CD8-positive, alpha-beta T cell (primary cell): ENCODE measurements at regions of chr7 and their contacts with region 1.

Region 1: DNA sequence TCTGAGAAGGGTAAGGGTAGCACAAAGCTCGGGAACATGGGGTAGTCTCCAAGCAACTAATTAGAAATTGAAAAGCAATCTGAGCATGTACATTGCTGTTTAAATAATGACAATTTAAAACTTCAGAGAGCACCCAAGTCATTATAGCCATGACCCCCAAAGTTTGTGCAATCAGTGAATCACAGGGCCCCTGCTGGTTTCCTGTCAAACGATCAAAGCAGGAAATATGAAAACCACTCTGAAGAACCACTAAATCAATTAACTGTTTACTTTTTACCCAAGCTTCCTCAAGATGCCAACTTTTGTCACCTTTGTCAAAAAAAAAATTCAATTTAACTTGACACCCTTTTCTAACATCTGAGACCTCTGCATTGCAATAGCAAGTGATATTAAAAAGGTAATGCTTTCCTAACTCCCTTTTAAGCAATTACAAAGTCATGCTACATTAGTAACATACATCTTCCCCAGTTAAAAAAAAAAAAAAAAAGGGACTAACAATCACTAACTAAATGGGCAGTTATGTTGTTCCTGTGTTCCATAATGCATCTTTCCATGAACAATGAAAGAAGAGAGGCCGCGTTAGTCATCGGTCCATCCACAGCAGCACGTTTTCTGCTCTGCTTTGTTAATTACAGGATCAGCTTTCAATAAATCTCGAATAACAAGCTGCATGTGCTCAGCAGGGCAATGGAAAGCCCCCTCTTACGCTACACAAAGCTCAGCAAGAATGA is 80.6 kb downstream of the ETV1 start:
- DNase-seq: peak in 8 of 9 experiments; percentile 1 to 55 (median 24)
- ATAC-seq: peak; percentile 48
- H3K4me3 ChIP-seq: no peak overlapping the region
- H3K4me3 Mint-ChIP-seq: peak overlapping the region; percentile 0
- H3K27ac ChIP-seq: no peak overlapping the region
- H3K27ac Mint-ChIP-seq: no peak overlapping the region
- H3K4me1 ChIP-seq: peaks cover 41% of the 10 kb centered on the region
- H3K4me1 Mint-ChIP-seq: peaks cover 26% of the 10 kb centered on the region
- H3K27me3 ChIP-seq: no peaks in the 10 kb centered on the region
- H3K27me3 Mint-ChIP-seq: no peaks in the 10 kb centered on the region
- CTCF ChIP-seq: no peak

Region 2: GRCh38 chr7:13850185-13850752 is 58.6 kb before region 1 on chr7:
- CTCF ChIA-PET with region 1: no interaction called
- POLR2A ChIA-PET with region 1: no interaction called
- intact Hi-C with region 1: loop called in 1 of 2 experiments (anchors 5 kb)
- DNase-seq: peak; percentile 27 to 85 (median 63)
- ATAC-seq: peak; percentile 92
- H3K4me3 ChIP-seq: no peak overlapping the region
- H3K4me3 Mint-ChIP-seq: no peak overlapping the region
- H3K27ac ChIP-seq: peak overlapping the region in 1 of 2 experiments; percentile 48
- H3K27ac Mint-ChIP-seq: peak overlapping the region; percentile 86
- H3K4me1 ChIP-seq: peaks cover 21% of the 10 kb centered on the region
- H3K4me1 Mint-ChIP-seq: peaks cover 19% of the 10 kb centered on the region
- H3K27me3 ChIP-seq: no peaks in the 10 kb centered on the region
- H3K27me3 Mint-ChIP-seq: no peaks in the 10 kb centered on the region
- CTCF ChIP-seq: no peak

Region 3: DNA sequence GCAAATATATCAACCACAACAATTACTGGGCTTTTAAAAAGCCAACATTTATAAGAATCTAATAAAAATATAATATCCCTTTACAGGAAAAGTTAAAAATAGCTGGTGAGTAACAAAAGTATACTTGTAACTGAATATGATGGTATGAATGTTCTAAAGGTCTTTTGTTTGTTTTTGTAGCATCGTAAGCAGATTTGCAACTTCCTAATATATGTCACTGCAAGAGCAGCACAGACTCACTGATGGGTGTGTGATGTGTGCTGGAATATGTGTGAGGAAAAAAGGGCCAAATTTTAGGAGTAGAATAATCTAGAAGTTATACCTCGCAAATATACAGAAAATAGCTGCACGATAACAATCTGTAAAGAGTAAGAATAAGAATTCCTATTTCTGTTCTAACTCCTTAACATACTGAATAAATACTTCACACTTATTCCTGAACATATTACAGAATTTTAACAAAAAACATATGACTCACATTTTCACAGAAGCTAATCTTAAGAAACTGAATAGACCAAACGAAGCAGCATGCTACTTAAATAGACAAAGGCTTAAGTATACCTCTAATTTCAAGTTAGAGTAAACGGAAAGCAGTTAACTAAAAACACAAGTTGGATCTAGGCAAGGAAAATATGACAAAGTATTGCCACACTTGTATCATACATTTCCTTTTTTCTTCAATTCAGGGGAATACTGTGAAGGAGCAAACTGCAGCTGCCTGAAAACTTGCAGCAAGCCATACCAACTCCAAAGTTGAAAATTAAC is 71.0 kb after region 1 on chr7:
- CTCF ChIA-PET with region 1: no interaction called
- POLR2A ChIA-PET with region 1: no interaction called
- intact Hi-C with region 1: loop called in 1 of 2 experiments (anchors 5 kb)
- DNase-seq: no peak
- ATAC-seq: no peak
- H3K4me3 ChIP-seq: no peak overlapping the region
- H3K4me3 Mint-ChIP-seq: no peak overlapping the region
- H3K27ac ChIP-seq: no peak overlapping the region
- H3K27ac Mint-ChIP-seq: no peak overlapping the region
- H3K4me1 ChIP-seq: no peaks in the 10 kb centered on the region
- H3K4me1 Mint-ChIP-seq: no peaks in the 10 kb centered on the region
- H3K27me3 ChIP-seq: no peaks in the 10 kb centered on the region
- H3K27me3 Mint-ChIP-seq: peaks cover 2% of the 10 kb centered on the region
- CTCF ChIP-seq: no peak

Region 4: DNA sequence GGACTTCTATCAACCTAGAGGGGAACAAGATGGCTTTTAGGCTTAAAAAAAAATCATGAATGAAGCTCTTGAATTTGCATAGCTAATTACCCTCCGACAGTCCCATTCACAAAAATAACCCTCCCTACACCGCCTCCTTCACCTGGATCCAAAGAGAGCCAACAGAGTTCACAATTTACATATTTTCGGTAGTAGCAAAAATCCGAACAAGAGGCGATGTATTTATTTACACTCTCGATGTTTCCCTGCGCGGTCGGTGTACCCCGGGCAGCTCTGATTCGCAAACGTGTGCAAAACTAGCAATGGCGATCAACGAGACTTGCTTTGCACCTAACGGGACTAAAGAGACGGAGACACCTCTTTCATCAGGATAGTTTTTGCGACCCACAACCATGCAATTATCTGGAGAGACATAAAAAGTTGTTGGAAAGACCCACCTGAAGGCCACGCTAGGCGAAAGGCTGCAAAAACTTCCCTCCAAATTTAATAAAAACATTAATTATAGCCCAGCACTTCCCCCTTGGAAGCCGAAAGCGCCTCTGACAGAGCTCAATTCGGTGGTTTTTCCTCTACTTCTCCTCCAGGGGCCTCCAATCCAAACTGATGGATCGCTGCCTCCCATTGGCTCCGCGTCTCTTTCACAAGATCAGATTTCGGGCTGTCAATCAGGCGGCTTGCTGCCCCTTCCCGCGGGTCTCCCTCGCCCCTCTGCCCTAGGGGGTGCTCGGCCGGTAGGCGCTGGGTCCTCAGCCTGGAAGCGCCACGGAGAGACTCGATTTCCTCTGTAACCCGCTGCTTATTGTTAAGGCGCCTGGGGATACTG is 80.5 kb after region 1 on chr7 and contains the start of gene ETV1:
- CTCF ChIA-PET with region 1: no interaction called
- POLR2A ChIA-PET with region 1: no interaction called
- intact Hi-C with region 1: loop called in 1 of 2 experiments (anchors 5 kb)
- DNase-seq: peak in 2 of 9 experiments; percentile 26 to 32
- ATAC-seq: no peak
- H3K4me3 ChIP-seq: peak within 1 kb of the TSS; percentile 56 to 67
- H3K4me3 Mint-ChIP-seq: no peak within 1 kb of the TSS
- H3K27ac ChIP-seq: no peak within 1 kb of the TSS
- H3K27ac Mint-ChIP-seq: no peak within 1 kb of the TSS
- H3K4me1 ChIP-seq: peaks cover 20% of the 10 kb centered on the region
- H3K4me1 Mint-ChIP-seq: no peaks in the 10 kb centered on the region
- H3K27me3 ChIP-seq: peaks cover 9 to 11% of the 10 kb centered on the region in 2 experiments
- H3K27me3 Mint-ChIP-seq: peaks cover 12% of the 10 kb centered on the region
- CTCF ChIP-seq: no peak
- total RNA-seq, gene ETV1: not detected

Region 5: DNA sequence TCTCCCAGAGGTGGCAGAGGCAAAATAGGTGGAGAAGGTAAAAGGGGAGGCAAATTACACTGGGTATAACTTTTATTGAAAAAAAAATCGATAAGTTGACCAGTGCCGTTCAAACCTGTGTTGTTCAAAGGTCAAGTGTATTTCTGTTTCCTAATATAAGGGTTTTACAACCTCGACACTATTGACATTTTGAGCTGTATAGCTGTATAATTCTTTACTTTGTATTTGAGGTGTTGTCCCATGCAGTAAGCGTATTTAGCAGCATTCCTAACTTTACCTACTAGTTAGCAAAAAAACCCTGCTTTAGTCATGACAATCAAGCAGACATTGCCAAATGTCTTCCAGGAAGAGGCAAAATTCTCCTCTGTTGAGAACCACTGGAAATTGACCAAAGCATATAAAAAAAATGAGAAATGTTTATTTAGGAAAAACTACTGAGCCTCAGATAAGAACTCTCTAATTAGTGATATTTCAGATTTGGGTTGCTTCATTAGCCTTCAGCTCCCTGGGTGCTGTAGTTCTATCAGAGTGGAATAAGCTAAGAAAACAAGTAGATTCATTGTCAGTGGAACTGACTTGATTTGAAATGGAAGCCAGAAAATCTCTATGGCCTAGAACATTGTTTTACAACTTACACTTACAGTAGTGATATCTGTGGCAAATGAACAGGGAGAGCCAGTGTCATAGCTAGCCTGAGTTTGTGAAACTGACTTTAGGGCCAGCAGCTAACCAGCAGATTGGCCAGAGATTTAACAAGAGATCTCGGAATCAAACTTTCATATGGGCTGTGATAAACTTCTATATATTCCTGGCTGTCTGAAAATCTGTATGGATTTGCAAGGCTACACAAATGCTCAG is 662.1 kb after region 1 on chr7:
- CTCF ChIA-PET with region 1: no interaction called
- POLR2A ChIA-PET with region 1: no interaction called
- intact Hi-C with region 1: loop called in 1 of 2 experiments (anchors 5 kb)
- DNase-seq: no peak
- ATAC-seq: no peak
- H3K4me3 ChIP-seq: no peak overlapping the region
- H3K4me3 Mint-ChIP-seq: no peak overlapping the region
- H3K27ac ChIP-seq: no peak overlapping the region
- H3K27ac Mint-ChIP-seq: no peak overlapping the region
- H3K4me1 ChIP-seq: no peaks in the 10 kb centered on the region
- H3K4me1 Mint-ChIP-seq: no peaks in the 10 kb centered on the region
- H3K27me3 ChIP-seq: no peaks in the 10 kb centered on the region
- H3K27me3 Mint-ChIP-seq: no peaks in the 10 kb centered on the region
- CTCF ChIP-seq: no peak